ENCODE measurements at regions of chr7 and their contacts with region 1.

Region 1: DNA sequence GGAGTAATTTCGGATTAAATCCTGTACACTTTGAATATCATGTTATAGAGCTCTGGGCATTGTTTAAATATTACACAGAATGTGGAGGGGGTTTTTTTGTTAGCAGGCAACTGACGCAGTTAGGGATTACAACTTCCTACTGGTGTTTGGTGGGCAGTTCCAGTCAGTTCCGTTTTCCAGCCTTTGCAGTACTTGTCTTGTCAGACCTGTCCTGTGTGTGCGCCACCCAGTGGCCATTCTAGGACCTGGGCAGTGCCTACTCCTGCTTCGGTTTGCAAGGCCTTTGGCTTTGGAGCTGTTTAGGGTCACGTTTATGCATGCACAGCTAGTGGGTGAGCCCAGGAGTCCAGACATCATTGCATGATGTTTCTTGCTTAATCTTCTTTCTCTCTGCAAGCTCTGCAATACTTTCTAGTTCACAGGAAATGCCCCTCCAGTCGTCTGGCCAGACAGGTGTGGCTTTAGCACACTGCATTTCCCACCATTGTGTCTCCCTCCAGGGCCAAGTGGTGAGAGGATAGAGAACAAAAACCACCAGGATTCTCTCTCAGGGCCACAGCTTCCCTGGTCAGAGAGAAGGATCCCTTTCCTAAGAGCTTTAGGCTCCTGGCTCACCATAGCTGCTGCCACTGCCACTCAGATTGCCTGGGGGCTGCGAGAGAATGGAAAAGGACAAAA is 96.5 kb upstream of the TARP start:
- DNase-seq: peak; percentile 83
- H3K4me3 Mint-ChIP-seq: no peak overlapping the region
- H3K27ac Mint-ChIP-seq: no peak overlapping the region
- H3K4me1 Mint-ChIP-seq: peaks cover 52% of the 10 kb centered on the region
- H3K27me3 Mint-ChIP-seq: no peaks in the 10 kb centered on the region

Region 2: DNA sequence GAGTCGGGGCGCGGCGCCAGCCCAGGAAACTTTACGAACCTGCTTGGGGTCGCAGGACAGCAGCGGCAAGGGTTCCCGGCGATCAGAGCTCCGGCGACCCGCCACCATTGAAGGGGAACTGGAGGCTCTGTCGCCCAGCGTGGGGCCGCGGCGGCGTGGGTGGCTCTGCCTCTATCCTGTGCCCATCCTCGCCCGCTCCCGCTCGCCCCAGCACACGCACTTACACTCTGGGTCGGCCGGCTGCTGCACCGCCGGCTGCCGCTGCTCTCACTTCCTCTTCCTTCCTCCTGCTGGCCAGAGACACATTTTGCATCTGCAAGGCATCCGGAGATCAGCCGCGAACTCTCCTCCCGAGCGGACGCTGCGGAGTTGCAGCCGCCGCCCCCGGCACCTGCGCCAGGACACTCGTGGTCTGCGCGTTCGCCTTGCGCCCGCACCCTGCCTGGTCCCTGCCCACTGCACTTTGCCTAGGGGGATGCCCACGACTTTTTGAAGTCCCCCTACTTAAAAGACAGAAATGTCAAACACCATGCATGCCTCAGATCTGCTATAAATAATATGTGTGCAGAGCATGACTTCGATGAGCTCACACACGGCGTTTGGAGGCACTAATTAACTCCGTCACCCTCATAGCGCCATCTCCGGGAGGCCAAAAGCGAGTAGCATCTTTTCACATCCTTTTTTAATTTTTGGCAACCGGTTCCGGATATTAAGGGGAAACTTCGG is 921.2 kb before region 1 on chr7 and contains the start of gene ELMO1:
- CTCF ChIA-PET with region 1: no interaction called
- intact Hi-C with region 1: loop called (anchors 10 kb)
- DNase-seq: peak; percentile 81
- H3K4me3 Mint-ChIP-seq: peak within 1 kb of the TSS; percentile 94
- H3K27ac Mint-ChIP-seq: peak within 1 kb of the TSS; percentile 95
- H3K4me1 Mint-ChIP-seq: peaks cover 45% of the 10 kb centered on the region
- H3K27me3 Mint-ChIP-seq: no peaks in the 10 kb centered on the region
- total RNA-seq, gene ELMO1: 129 to 137 TPM

Region 3: GRCh38 chr7:37901236-37901827 is 468.6 kb before region 1 on chr7:
- CTCF ChIA-PET with region 1: interaction called, 3 read pairs
- intact Hi-C with region 1: loop called (anchors 1 kb)
- DNase-seq: no peak
- H3K4me3 Mint-ChIP-seq: no peak overlapping the region
- H3K27ac Mint-ChIP-seq: no peak overlapping the region
- H3K4me1 Mint-ChIP-seq: peaks cover 2% of the 10 kb centered on the region
- H3K27me3 Mint-ChIP-seq: peaks cover 4% of the 10 kb centered on the region

Region 4: GRCh38 chr7:38178004-38178694 is 191.8 kb before region 1 on chr7 and contains the start of gene STARD3NL:
- CTCF ChIA-PET with region 1: interaction called, 17 read pairs
- intact Hi-C with region 1: loop called (anchors 2 kb)
- DNase-seq: peak; percentile 96
- H3K4me3 Mint-ChIP-seq: peak within 1 kb of the TSS; percentile 94
- H3K27ac Mint-ChIP-seq: peak within 1 kb of the TSS; percentile 91
- H3K4me1 Mint-ChIP-seq: peaks cover 33% of the 10 kb centered on the region
- H3K27me3 Mint-ChIP-seq: peaks cover 9% of the 10 kb centered on the region
- total RNA-seq, gene STARD3NL: 23.7 to 25.7 TPM

Region 5: DNA sequence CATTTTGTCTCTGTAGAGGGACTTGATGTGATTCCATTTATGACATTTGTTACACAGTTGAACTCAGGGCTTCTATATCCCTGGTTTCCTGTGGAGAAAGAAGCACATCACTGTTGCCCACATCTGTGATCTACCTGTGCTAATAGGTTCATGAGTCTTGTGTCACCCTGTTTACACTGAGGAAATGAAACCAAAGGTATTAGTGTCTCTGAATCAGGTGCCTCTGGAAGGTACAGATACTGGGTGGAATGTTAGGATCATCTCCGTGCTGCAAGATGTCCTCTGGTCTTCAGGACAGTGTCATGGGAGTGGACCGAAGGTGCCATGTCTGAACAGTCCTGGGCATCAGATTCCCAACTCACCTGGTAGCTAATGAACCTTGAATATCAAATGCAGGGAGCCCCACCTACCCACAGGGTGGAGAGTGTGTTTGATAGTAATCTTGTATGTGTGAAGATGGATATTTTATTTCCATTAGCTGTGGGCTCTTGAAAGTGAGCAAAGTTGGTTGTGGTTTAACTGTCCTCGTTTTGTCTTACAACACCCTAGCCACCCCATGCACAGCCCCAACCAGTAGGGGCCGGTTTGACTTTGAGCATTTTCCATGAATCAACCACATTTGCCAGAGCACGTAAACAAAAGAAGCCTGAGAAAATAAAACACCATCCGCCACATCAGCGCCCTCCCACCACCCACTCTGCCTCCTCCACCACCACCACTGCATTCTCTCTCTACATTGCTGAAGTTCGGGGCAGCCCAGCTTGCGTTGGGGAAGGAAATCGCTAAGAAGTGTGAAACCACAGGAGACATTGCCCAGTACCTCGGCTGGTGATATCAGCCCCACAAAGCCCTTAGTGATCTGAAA is 137.2 kb before region 1 on chr7:
- CTCF ChIA-PET with region 1: interaction called, 32 read pairs
- intact Hi-C with region 1: no loop called
- DNase-seq: peak; percentile 82
- H3K4me3 Mint-ChIP-seq: peak overlapping the region; percentile 9
- H3K27ac Mint-ChIP-seq: peak overlapping the region; percentile 2
- H3K4me1 Mint-ChIP-seq: peaks cover 21% of the 10 kb centered on the region
- H3K27me3 Mint-ChIP-seq: no peaks in the 10 kb centered on the region

Region 6: DNA sequence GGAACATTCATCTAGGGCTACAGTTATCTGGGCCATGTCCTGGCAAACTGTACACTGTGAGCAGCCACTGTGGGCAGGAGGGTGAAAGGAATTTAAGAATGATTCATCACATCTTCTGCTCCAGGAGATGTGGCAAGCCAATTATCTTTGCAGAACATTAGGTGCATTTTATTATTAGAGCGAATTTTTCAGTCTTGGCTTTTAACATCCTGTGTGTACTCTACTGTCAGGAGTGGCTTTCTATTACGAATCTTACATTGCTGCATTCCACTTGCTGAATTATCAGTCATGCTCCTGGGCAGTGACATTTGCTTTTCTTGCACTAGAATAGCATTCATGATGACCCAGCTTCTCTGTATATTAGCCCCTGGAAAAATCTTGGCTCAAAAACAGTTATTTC is 12.7 kb after region 1 on chr7:
- CTCF ChIA-PET with region 1: interaction called, 30 read pairs
- intact Hi-C with region 1: no loop called
- DNase-seq: no peak
- H3K4me3 Mint-ChIP-seq: no peak overlapping the region
- H3K27ac Mint-ChIP-seq: no peak overlapping the region
- H3K4me1 Mint-ChIP-seq: no peaks in the 10 kb centered on the region
- H3K27me3 Mint-ChIP-seq: no peaks in the 10 kb centered on the region

Measured in activated naive CD4-positive, alpha-beta T cell treated with anti-CD3 and anti-CD28 coated beads for 36 hours (primary cell).